WTC11 (cell line): ENCODE measurements at regions of chr6 and their contacts with region 1.

Region 1: GRCh38 chr6:39003072-39003471 is 45.5 kb upstream of the GLP1R start:
- DNase-seq: peak; percentile 52
- ATAC-seq: peak; percentile 76
- H3K4me3 Mint-ChIP-seq: no peak overlapping the region
- H3K27ac Mint-ChIP-seq: no peak overlapping the region
- H3K4me1 Mint-ChIP-seq: no peaks in the 10 kb centered on the region
- H3K27me3 Mint-ChIP-seq: peaks cover 8% of the 10 kb centered on the region
- CTCF ChIP-seq: 0 out of 2 replicates have a peak, but pooled peaks have one; percentile 32

Region 2: DNA sequence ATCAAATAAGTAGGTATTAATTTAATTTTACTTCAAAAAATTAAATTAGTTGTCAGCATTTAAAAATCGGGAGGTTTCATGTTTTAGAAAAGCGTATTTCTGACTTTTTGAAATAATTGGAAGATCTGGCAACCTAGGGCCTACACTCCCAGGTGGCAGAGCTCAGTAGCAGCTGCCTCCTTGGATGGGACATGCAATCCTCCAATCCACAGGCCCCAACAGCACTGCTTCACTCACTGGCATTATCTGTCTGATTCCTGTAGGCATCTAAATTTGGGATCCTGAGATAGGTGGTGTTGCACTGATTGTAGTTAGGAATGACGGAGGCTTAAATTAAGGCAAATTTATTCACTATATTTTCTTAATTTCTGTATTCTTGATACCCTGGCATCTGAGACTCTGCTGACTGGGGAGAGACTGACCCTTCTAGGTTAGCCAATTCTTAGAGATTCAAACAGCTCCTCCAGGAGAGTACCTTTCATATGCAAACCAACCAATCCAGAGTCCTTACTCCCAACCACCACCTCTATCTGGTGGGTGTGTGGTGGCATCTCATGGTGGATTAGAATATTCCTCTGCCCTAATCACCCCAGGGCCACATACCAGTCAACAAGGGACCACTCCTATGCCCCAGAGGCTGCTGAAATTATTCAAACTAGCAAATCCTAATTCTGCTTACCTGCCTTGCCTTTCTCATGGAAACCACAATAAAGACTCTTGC is 101.1 kb before region 1 on chr6:
- CTCF ChIA-PET with region 1: no interaction called
- POLR2A ChIA-PET with region 1: no interaction called
- DNase-seq: no peak
- ATAC-seq: peak; percentile 97
- H3K4me3 Mint-ChIP-seq: no peak overlapping the region
- H3K27ac Mint-ChIP-seq: no peak overlapping the region
- H3K4me1 Mint-ChIP-seq: peaks cover 13% of the 10 kb centered on the region
- H3K27me3 Mint-ChIP-seq: no peaks in the 10 kb centered on the region; the same call in 1 of the 2 replicates
- CTCF ChIP-seq: no peak

Region 3: DNA sequence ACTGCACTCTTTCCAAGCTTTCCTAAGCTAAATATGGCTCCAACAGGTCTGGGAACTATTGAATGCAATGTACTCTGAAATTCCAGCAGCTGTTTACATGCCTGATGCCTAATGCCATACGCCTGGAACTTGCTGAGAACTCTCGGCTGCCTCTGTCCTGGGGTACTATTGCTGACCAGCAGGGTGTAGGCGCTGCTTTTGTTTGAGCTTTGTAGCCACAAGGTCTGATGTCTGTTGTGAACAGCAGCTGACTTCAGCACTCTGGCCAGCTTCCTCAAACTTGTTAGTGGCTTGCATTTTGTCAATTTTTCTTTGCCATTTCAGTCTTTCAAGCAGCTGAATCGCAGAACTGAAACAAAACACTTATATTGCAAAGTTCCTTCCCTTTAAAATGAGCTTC is 85.3 kb after region 1 on chr6:
- CTCF ChIA-PET with region 1: interaction called, 45 read pairs
- POLR2A ChIA-PET with region 1: no interaction called
- DNase-seq: peak; percentile 75
- ATAC-seq: peak; percentile 91
- H3K4me3 Mint-ChIP-seq: no peak overlapping the region
- H3K27ac Mint-ChIP-seq: no peak overlapping the region
- H3K4me1 Mint-ChIP-seq: peaks cover 49% of the 10 kb centered on the region
- H3K27me3 Mint-ChIP-seq: no peaks in the 10 kb centered on the region; the same call in 1 of the 2 replicates
- CTCF ChIP-seq: no peak